ENCODE measurements at regions of chr10 and their contacts with region 1.

Region 1: DNA sequence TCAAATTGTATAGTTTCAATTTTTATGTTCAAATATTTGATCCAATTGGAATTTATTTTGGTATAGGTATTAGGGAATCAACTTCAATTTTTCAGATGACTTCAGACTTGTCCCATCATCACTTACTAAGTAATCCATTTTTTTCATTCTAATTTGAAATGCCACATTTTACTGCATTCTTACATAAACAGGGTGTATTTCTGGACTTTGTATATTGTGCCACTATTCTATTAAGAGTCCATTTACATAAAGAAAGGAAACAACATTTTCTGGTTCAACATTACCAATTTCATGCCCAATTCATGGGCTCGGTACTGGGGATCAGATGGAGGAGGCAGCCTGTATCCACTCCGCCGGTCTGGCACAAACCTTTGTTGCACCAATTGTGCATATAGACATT is 15.8 kb downstream of the ECD start:
- DNase-seq: peak; percentile 45
- H3K4me3 ChIP-seq: no peak overlapping the region
- H3K27ac ChIP-seq: no peak overlapping the region
- H3K4me1 ChIP-seq: no peaks in the 10 kb centered on the region
- H3K27me3 ChIP-seq: no peaks in the 10 kb centered on the region
- CTCF ChIP-seq: no peak

Region 2: GRCh38 chr10:72712136-72712535 is 439.9 kb before region 1 on chr10:
- CTCF ChIA-PET with region 1: no interaction called
- POLR2A ChIA-PET with region 1: no interaction called
- intact Hi-C with region 1: no loop called
- DNase-seq: no peak
- H3K4me3 ChIP-seq: no peak overlapping the region
- H3K27ac ChIP-seq: no peak overlapping the region
- H3K4me1 ChIP-seq: peaks cover 24% of the 10 kb centered on the region
- H3K27me3 ChIP-seq: no peaks in the 10 kb centered on the region
- CTCF ChIP-seq: no peak

Region 3: DNA sequence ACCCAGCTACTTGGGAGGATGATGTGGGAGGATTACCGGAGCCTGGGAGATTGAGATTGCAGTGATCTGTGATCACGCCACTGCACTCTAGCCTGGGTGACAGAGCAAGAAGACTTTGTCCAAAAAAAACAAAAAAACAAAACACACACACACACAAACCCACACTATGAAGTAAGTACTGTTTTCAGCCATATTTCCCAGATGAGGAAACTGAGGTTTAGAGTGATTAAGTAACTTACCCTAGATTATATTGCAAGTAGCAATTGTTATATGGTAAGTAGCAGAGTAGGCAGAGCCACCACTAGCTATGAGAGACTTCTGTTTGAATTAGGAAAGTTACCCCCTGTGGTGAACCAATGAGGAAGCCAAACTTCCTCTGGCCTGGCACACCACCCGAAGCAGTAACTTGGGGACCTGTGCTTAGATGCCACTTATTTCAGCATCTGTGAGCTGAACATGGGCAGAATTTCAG is 398.2 kb before region 1 on chr10:
- CTCF ChIA-PET with region 1: no interaction called
- POLR2A ChIA-PET with region 1: interaction called, 11 read pairs
- intact Hi-C with region 1: no loop called
- DNase-seq: peak; percentile 45
- H3K4me3 ChIP-seq: no peak overlapping the region
- H3K27ac ChIP-seq: no peak overlapping the region
- H3K4me1 ChIP-seq: no peaks in the 10 kb centered on the region
- H3K27me3 ChIP-seq: no peaks in the 10 kb centered on the region
- CTCF ChIP-seq: no peak

Measured in A673 (cell line).